HEK293 (cell line): ENCODE measurements at regions of chrX and their contacts with region 1.

Region 1: DNA sequence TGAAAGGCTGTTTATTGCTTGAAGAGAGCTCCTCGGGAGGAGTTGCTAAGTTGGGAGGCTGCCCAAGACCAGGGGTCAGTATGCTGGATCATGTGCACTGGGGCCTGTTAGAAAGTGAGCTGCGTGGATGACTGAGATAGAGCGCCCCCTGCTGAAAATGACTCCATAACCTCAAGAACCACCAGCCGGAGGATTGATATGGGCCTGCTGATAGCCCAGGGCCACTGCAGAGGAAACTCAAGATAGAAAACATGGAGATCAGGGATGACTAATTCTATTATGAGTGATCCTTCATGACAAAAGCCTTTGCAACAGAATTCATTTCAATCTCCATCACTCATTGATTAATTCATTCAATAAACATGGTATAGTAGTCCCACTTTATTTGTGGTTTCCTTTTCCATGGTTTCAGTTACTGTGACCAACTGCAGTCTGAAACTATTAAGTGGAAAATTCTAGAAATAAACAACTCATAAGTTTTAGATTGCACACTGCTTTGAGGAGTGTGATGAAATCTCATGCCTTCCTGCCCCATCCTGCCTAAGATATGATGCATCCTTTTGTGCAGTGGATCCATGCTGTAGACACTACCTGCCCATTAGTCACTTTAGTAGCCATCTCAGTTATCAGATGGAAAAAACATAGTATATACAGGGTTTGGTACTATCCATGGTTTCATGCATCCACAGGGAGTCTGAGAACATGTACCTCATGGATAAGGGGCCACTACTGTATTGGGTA is 126.7 kb upstream of the MBNL3 start:
- H3K4me3 ChIP-seq: no peak overlapping the region
- H3K27ac ChIP-seq: no peak overlapping the region
- H3K4me1 ChIP-seq: no peaks in the 10 kb centered on the region
- CTCF ChIP-seq: no peak

Region 2: GRCh38 chrX:131841496-131842410 is 773.8 kb before region 1 on chrX:
- CTCF ChIA-PET with region 1: interaction called, 30 read pairs
- POLR2A ChIA-PET with region 1: no interaction called
- H3K4me3 ChIP-seq: no peak overlapping the region
- H3K27ac ChIP-seq: no peak overlapping the region
- H3K4me1 ChIP-seq: peaks cover 7% of the 10 kb centered on the region; the same call in 1 of the 2 replicates
- CTCF ChIP-seq: peak; percentile 89

Region 3: DNA sequence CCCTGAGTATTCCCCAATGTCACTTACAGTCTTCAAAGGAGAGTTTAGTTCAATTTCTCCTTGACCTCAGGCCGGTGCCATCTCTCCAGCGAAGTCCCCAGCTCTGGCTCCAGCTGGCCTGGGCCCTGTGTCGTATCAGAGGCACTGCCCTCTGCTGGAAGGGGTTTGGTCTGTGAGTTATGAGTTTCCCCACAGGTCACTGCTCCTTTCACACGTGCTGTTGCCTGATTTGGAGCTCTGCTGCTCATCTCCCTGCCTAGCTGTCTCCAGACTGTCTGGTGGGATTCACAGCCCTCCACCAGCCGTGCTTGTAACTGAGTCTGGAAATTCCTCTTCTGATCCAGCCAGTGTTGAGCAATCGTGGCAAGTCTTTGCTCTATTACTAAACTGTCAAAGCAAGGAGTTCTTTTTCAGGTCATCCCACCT is 396.2 kb before region 1 on chrX and contains the start of gene RAP2C:
- CTCF ChIA-PET with region 1: interaction called, 34 read pairs
- POLR2A ChIA-PET with region 1: no interaction called
- H3K4me3 ChIP-seq: peak within 1 kb of the TSS; percentile 70
- H3K27ac ChIP-seq: peak within 1 kb of the TSS; percentile 95
- H3K4me1 ChIP-seq: peaks cover 3% of the 10 kb centered on the region; the same call in 1 of the 2 replicates
- CTCF ChIP-seq: peak; percentile 78

Region 4: DNA sequence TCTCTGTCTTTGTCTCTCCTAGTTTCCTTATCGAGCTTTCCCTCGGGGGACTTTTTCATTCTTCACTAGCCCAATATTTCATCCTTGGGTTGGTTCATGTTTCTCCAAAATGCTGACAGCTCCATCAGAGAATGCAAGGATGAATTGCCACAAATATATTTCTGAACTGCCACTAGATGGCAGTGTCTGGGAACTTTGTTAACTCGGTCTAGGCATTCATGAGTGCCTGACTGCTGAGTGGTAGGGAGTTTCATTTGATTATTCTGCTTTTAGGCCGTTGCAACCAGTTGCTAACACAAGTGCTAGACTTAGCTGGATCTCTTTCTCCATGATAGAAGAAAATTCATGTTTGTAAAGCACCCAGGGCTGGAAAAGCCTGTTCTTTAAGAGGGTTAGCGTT is 322.8 kb before region 1 on chrX:
- CTCF ChIA-PET with region 1: interaction called, 58 read pairs
- POLR2A ChIA-PET with region 1: no interaction called
- H3K4me3 ChIP-seq: no peak overlapping the region
- H3K27ac ChIP-seq: no peak overlapping the region; the same call in 1 of the 2 replicates
- H3K4me1 ChIP-seq: no peaks in the 10 kb centered on the region
- CTCF ChIP-seq: peak; percentile 52; the same call in 1 of the 2 replicates

Region 5: GRCh38 chrX:132631579-132632232 is 16.1 kb after region 1 on chrX:
- CTCF ChIA-PET with region 1: interaction called, 34 read pairs
- POLR2A ChIA-PET with region 1: no interaction called
- H3K4me3 ChIP-seq: no peak overlapping the region
- H3K27ac ChIP-seq: no peak overlapping the region
- H3K4me1 ChIP-seq: no peaks in the 10 kb centered on the region
- CTCF ChIP-seq: peak; percentile 61